PC-9 (cell line): ENCODE measurements at regions of chr10 and their contacts with region 1.

Region 1: GRCh38 chr10:88851706-88852105 is at the start of gene ANKRD22:
- DNase-seq: peak; percentile 76 to 98
- H3K4me3 ChIP-seq: peak within 1 kb of the TSS; percentile 51
- H3K27ac ChIP-seq: peak within 1 kb of the TSS; percentile 90
- H3K4me1 ChIP-seq: peaks cover 52% of the 10 kb centered on the region
- H3K27me3 ChIP-seq: no peaks in the 10 kb centered on the region
- CTCF ChIP-seq: no peak
- total RNA-seq, gene ANKRD22: 3.8 and 4.9 TPM in 2 replicates

Region 2: DNA sequence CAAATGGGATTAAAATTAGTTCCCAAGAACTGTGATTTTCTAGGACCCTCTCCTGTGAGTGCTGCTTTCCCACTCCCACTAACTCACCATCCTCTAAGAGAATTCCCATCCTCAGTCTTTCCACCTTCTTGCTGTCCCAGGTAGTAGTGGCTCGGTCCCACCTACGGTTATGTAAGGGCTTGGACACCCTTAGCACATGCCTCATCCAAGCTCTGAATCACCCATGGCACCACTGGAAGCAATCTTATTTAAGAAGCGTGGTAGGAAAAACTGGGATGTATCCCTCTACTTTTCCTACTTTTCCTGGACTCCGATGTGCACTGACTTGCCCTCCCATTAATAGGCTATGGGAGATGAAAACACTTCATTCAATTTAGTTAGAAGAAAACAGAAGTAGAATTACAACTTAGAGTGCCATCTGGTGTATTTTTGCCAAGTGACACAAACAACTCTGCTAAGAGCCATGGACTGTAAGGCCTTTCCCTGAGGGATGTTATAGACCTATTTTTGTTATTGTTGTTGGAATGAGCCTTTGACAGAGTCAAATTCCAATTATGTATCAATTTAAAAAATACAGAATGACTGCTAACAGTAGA is 13.7 kb after region 1 on chr10:
- CTCF ChIA-PET with region 1: no interaction called
- POLR2A ChIA-PET with region 1: no interaction called
- intact Hi-C with region 1: loop called (anchors 2 kb)
- DNase-seq: no peak
- H3K4me3 ChIP-seq: no peak overlapping the region
- H3K27ac ChIP-seq: no peak overlapping the region
- H3K4me1 ChIP-seq: peaks cover 16% of the 10 kb centered on the region; the same call in 1 of the 2 replicates
- H3K27me3 ChIP-seq: no peaks in the 10 kb centered on the region
- CTCF ChIP-seq: peak; percentile 30; the same call in 1 of the 2 replicates

Region 3: GRCh38 chr10:88880282-88881076 is 28.8 kb after region 1 on chr10:
- CTCF ChIA-PET with region 1: no interaction called
- POLR2A ChIA-PET with region 1: interaction called, 11 read pairs
- intact Hi-C with region 1: loop called (anchors 2 kb)
- DNase-seq: peak; percentile 49 to 70
- H3K4me3 ChIP-seq: peak overlapping the region; percentile 82
- H3K27ac ChIP-seq: peak overlapping the region; percentile 92
- H3K4me1 ChIP-seq: peaks cover 27% of the 10 kb centered on the region
- H3K27me3 ChIP-seq: no peaks in the 10 kb centered on the region
- CTCF ChIP-seq: peak; percentile 27; the same call in 1 of the 2 replicates

Region 4: GRCh38 chr10:88944813-88945212 is 93.1 kb after region 1 on chr10:
- CTCF ChIA-PET with region 1: no interaction called
- POLR2A ChIA-PET with region 1: no interaction called
- intact Hi-C with region 1: no loop called
- DNase-seq: no peak
- H3K4me3 ChIP-seq: no peak overlapping the region
- H3K27ac ChIP-seq: no peak overlapping the region
- H3K4me1 ChIP-seq: no peaks in the 10 kb centered on the region
- H3K27me3 ChIP-seq: no peaks in the 10 kb centered on the region
- CTCF ChIP-seq: no peak